Esophagus muscularis mucosa (tissue), 4 donors: ENCODE measurements at regions of chr1 and their contacts with region 1.

Region 1: GRCh38 chr1:59707178-59707791 is 107.5 kb upstream of the HOOK1 start:
- DNase-seq: no peak
- H3K4me3 ChIP-seq: no peak overlapping the region
- H3K27ac ChIP-seq: peak overlapping the region; percentile 53 to 72 (median 60)
- H3K4me1 ChIP-seq: peaks cover 49 to 63% (median 59%) of the 10 kb centered on the region in 4 donors
- H3K27me3 ChIP-seq: no peaks in the 10 kb centered on the region
- CTCF ChIP-seq: no peak
- EP300 ChIP-seq: no peak
- POLR2A ChIP-seq: no peak

Region 2: DNA sequence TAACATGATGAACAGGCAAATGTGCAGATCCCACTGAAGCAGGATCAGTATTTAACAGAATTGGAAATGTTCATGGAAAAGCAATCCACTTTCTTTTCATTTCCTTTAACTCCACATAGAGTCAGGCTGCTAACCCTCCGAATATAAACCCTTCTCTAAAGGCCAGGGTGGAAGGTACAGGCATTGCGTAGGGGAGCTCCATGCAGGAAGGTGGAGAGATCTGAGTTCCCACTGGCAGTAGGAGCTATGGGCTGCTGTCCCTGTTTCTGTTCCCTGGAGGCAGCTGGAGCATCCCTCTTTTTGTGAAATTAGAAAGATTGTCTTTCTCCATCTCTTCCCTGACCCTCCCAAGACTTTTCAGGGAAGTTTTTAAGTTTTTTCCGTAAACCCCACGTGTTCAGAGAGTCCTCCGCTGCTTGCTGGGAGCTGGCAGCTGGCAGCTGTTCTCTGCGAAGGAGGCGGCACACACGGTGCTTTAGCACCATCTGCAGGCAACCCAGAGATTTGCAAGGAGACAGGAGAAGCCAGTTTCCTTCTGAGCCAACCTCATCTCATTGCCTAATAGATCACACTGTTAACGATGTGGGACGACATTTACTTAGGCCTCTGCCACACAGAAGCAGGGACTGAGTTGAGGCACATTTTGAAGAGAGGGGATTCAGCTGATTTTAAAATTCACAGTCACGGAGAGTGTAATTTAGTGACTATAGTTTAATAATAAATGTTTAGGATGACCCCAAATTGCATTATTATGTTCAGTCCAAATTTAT is 52.1 kb after region 1 on chr1:
- intact Hi-C with region 1: loop called (anchors 2 kb)
- DNase-seq: peak; percentile 95
- H3K4me3 ChIP-seq: peak overlapping the region; percentile 32 to 47 (median 39)
- H3K27ac ChIP-seq: peak overlapping the region; percentile 33 to 73 (median 62)
- H3K4me1 ChIP-seq: peaks cover 7 to 14% (median 11%) of the 10 kb centered on the region in 4 donors
- H3K27me3 ChIP-seq: no peaks in the 10 kb centered on the region
- CTCF ChIP-seq: peak; percentile 96 to 99 (median 98)
- EP300 ChIP-seq: no peak
- POLR2A ChIP-seq: no peak